K562 (cell line): ENCODE measurements at regions of chr12 and their contacts with region 1.

Region 1: GRCh38 chr12:26701604-26702215 is 131.3 kb downstream of the ITPR2 start:
- DNase-seq: peak in 3 of 4 experiments; percentile 10 to 52 (median 14)
- ATAC-seq: peak; percentile 79
- H3K4me3 ChIP-seq: no peak overlapping the region
- H3K27ac ChIP-seq: no peak overlapping the region
- H3K4me1 ChIP-seq: peaks cover 0 to 7% of the 10 kb centered on the region in 2 experiments; a peak in 3 of 5 replicates
- H3K27me3 ChIP-seq: peaks cover 0 to 3% of the 10 kb centered on the region in 2 experiments; a peak in 2 of 5 replicates
- CTCF ChIP-seq: peak in 2 of 3 experiments; percentile 40 to 77; a peak in 4 of 6 replicates
- EP300 ChIP-seq: no peak
- POLR2A ChIP-seq: no peak
- RAD21 ChIP-seq: peak; percentile 91 to 94

Region 2: DNA sequence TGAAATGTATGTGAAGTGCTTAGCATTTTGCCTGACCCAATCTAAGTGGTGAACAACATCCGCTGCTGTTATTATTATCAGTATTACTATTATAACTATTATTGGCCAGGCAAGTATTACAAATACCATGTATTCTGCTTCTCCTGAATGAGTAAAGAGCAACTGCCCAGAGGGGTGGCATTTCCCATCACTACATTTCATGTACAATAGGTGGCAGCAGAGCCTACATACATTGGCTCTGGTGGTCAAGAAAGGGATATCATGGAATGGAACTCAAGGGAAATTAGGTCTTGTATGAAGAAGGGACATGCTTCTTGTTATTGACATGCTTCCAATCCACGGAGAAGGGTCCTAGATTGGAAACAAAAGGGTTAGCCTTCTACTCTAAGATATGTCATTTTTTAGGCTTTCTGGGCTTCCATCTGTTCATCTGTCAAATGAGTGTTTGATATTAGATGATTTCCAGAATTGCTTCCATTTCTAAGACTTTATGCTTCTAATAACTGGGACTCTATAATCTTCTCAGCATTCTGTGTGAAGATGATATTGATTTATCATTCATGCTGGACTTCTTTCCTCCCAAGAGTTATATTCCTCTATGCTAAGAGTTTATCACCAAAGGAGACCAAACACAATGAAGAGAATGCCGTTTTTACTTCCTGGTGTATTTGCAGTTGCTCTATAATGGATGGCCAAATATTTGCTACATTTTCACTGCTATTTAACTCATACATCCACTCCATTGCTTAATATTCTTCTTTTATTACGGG is 267.2 kb before region 1 on chr12:
- CTCF ChIA-PET with region 1: interaction called, 16 read pairs
- POLR2A ChIA-PET with region 1: no interaction called
- in situ Hi-C with region 1: no loop called
- intact Hi-C with region 1: loop called (anchors 1 kb)
- DNase-seq: peak; percentile 28 to 55 (median 48)
- ATAC-seq: peak; percentile 93
- H3K4me3 ChIP-seq: no peak overlapping the region
- H3K27ac ChIP-seq: no peak overlapping the region
- H3K4me1 ChIP-seq: no peaks in the 10 kb centered on the region
- H3K27me3 ChIP-seq: no peaks in the 10 kb centered on the region
- CTCF ChIP-seq: peak; percentile 71 to 98 (median 86)
- EP300 ChIP-seq: no peak
- POLR2A ChIP-seq: no peak
- RAD21 ChIP-seq: peak; percentile 83 to 91

Region 3: DNA sequence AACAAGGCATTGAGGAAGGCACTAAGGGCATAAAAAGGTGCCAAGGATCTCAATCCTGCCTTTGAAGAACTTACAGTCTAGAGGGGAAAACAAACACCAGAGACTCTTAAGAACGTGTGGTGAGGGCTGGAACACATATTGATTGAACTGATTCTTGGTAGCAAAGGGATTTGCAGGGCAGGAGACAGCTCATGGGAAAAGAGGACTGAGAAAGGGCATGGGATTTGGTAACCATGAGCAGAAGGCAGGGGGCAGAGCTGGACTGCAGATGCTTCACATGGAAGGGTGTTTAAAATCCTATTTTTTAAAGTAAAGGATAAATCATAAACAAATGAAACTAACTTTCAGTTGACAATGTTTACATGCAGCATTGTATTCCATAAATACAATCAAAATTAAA is 71.8 kb before region 1 on chr12:
- CTCF ChIA-PET with region 1: interaction called, 16 read pairs
- POLR2A ChIA-PET with region 1: interaction called, 4 read pairs
- in situ Hi-C with region 1: no loop called
- intact Hi-C with region 1: loop called (anchors 1 kb)
- DNase-seq: no peak
- ATAC-seq: peak; percentile 38; the same call in 1 of the 3 replicates
- H3K4me3 ChIP-seq: no peak overlapping the region
- H3K27ac ChIP-seq: no peak overlapping the region
- H3K4me1 ChIP-seq: peaks cover 0 to 11% of the 10 kb centered on the region in 2 experiments; a peak in 4 of 5 replicates
- H3K27me3 ChIP-seq: no peaks in the 10 kb centered on the region
- CTCF ChIP-seq: peak in 2 of 3 experiments; percentile 23 to 54; a peak in 2 of 6 replicates
- EP300 ChIP-seq: no peak
- POLR2A ChIP-seq: no peak
- RAD21 ChIP-seq: peak; percentile 64 to 73

Region 4: DNA sequence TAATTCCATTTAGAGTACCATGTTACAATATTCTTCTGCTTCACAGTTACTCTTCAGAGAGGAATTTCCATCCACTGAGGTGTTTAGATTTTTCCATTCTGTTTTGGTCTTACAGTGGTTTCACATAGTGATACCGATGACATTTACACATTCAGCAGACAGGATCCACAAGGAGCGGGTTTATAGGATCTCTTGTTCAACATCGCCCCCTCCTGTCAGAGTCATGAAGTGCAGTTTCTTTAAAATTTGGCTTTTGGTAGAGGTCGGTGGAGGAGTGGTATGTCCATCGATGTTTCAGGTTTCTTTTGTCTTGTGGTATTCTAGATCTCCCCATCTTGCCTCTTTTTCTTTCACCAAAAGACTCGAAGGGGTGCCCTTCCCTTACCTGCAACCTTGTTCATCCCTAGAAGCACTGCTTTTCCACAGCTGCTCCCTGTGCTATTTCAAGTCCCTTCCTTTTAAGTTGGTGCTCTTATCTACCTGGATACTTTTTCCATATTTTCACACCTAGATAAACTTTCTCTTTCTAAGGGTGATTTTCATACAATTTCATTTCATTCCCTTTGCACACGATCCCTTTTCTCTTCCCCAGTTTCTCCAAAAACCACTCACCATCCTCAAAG is 50.0 kb before region 1 on chr12:
- CTCF ChIA-PET with region 1: no interaction called
- POLR2A ChIA-PET with region 1: no interaction called
- in situ Hi-C with region 1: no loop called
- intact Hi-C with region 1: loop called (anchors 5 kb)
- DNase-seq: peak; percentile 70 to 72 (median 70)
- ATAC-seq: peak; percentile 88
- H3K4me3 ChIP-seq: no peak overlapping the region
- H3K27ac ChIP-seq: no peak overlapping the region
- H3K4me1 ChIP-seq: no peaks in the 10 kb centered on the region
- H3K27me3 ChIP-seq: no peaks in the 10 kb centered on the region
- CTCF ChIP-seq: peak; percentile 78 to 83 (median 80)
- EP300 ChIP-seq: no peak
- POLR2A ChIP-seq: no peak
- RAD21 ChIP-seq: peak; percentile 87 to 96

Region 5: GRCh38 chr12:26680727-26681455 is 20.8 kb before region 1 on chr12:
- CTCF ChIA-PET with region 1: no interaction called
- POLR2A ChIA-PET with region 1: no interaction called
- in situ Hi-C with region 1: no loop called
- intact Hi-C with region 1: no loop called
- DNase-seq: no peak
- ATAC-seq: no peak
- H3K4me3 ChIP-seq: no peak overlapping the region
- H3K27ac ChIP-seq: no peak overlapping the region
- H3K4me1 ChIP-seq: no peaks in the 10 kb centered on the region; a peak in 1 of 5 replicates
- H3K27me3 ChIP-seq: no peaks in the 10 kb centered on the region; a peak in 1 of 5 replicates
- CTCF ChIP-seq: no peak
- EP300 ChIP-seq: no peak
- POLR2A ChIP-seq: no peak
- RAD21 ChIP-seq: no peak